ENCODE measurements at regions of chr5 and their contacts with region 1.

Region 1: GRCh38 chr5:160082614-160083500 is 36.4 kb downstream of the PWWP2A start:
- DNase-seq: no peak
- H3K4me3 ChIP-seq: no peak overlapping the region
- H3K27ac ChIP-seq: no peak overlapping the region
- H3K4me1 ChIP-seq: no peaks in the 10 kb centered on the region
- CTCF ChIP-seq: no peak

Region 2: GRCh38 chr5:160159991-160160792 is 77.3 kb after region 1 on chr5:
- CTCF ChIA-PET with region 1: no interaction called
- POLR2A ChIA-PET with region 1: interaction called, 4 read pairs
- intact Hi-C with region 1: loop called (anchors 2 kb)
- DNase-seq: peak; percentile 25
- H3K4me3 ChIP-seq: no peak overlapping the region
- H3K27ac ChIP-seq: no peak overlapping the region
- H3K4me1 ChIP-seq: peaks cover 13% of the 10 kb centered on the region
- CTCF ChIP-seq: no peak

Region 3: GRCh38 chr5:160175438-160176218 is 92.8 kb after region 1 on chr5:
- CTCF ChIA-PET with region 1: no interaction called
- POLR2A ChIA-PET with region 1: interaction called, 11 read pairs
- intact Hi-C with region 1: no loop called
- DNase-seq: no peak
- H3K4me3 ChIP-seq: no peak overlapping the region
- H3K27ac ChIP-seq: no peak overlapping the region
- H3K4me1 ChIP-seq: no peaks in the 10 kb centered on the region
- CTCF ChIP-seq: no peak

Region 4: GRCh38 chr5:160342403-160342941 is 259.6 kb after region 1 on chr5:
- CTCF ChIA-PET with region 1: interaction called, 3 read pairs
- POLR2A ChIA-PET with region 1: interaction called, 3 read pairs
- intact Hi-C with region 1: loop called (anchors 2 kb)
- DNase-seq: no peak
- H3K4me3 ChIP-seq: no peak overlapping the region
- H3K27ac ChIP-seq: no peak overlapping the region
- H3K4me1 ChIP-seq: no peaks in the 10 kb centered on the region
- CTCF ChIP-seq: no peak

Region 5: GRCh38 chr5:160385496-160385895 is 302.6 kb after region 1 on chr5:
- CTCF ChIA-PET with region 1: no interaction called
- POLR2A ChIA-PET with region 1: interaction called, 4 read pairs
- intact Hi-C with region 1: loop called (anchors 5 kb)
- DNase-seq: no peak
- H3K4me3 ChIP-seq: no peak overlapping the region
- H3K27ac ChIP-seq: no peak overlapping the region
- H3K4me1 ChIP-seq: peaks cover 3% of the 10 kb centered on the region
- CTCF ChIP-seq: no peak